ENCODE measurements at regions of chr20 and their contacts with region 1.

Region 1: DNA sequence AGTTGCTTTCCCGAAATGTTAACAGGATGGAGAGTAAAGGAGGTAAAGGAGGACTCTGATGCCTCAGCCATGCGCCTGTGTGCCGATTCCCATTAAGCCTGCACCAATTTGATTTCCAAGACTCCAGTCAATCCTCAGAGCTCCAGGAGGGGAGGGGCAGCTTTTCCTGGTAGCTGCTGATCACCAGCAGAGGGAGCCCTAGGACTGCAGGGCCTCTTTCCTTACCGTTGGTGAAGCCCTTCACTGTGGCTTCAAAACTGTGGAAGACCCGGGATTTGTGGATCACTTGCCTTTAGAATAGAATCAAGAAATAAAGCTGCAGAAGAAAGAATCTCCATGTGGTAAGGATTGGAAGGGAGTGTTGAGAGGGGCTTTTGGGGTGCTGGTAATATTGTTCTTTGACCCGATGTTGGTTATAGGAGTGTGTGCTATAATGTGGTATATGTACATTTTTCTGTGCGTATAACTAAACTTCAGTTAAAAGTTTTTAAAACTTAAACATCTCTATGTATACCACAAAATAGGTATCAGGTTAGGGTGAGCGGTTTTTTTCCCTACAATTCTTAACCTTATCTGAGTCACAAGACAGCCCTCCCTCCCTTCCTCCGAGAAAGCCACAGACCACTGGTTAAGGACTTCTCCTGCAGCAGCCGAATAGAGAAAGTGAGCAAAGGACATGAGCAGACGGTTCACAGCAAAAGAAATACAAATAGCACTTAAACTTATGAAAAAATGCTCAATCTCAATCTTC is 6.9 kb upstream of the OSER1 start:
- DNase-seq: peak; percentile 72

Region 2: DNA sequence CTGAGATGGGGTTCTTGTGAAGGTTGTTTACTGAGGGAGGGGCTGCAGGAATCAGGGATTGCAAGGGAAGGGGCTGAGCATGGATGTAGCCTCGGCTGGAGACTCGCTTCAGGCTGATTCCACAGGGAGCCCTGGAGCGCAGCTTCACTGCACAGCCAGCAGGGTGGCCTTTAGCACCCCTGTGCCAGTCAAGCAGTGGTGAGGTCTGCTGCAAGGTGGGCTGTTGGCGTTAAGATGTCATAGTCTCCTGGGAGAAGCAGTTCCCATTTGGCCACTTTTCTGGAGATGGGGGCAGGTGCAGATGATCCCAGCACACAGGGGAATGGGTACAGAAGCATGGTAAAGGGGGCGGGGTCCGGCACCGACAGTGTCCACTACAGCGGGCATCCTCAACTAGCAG is 176.5 kb before region 1 on chr20:
- CTCF ChIA-PET with region 1: no interaction called
- POLR2A ChIA-PET with region 1: no interaction called
- DNase-seq: no peak

Region 3: GRCh38 chr20:44204155-44204831 is 13.2 kb before region 1 on chr20:
- CTCF ChIA-PET with region 1: no interaction called
- POLR2A ChIA-PET with region 1: no interaction called
- DNase-seq: no peak

Region 4: DNA sequence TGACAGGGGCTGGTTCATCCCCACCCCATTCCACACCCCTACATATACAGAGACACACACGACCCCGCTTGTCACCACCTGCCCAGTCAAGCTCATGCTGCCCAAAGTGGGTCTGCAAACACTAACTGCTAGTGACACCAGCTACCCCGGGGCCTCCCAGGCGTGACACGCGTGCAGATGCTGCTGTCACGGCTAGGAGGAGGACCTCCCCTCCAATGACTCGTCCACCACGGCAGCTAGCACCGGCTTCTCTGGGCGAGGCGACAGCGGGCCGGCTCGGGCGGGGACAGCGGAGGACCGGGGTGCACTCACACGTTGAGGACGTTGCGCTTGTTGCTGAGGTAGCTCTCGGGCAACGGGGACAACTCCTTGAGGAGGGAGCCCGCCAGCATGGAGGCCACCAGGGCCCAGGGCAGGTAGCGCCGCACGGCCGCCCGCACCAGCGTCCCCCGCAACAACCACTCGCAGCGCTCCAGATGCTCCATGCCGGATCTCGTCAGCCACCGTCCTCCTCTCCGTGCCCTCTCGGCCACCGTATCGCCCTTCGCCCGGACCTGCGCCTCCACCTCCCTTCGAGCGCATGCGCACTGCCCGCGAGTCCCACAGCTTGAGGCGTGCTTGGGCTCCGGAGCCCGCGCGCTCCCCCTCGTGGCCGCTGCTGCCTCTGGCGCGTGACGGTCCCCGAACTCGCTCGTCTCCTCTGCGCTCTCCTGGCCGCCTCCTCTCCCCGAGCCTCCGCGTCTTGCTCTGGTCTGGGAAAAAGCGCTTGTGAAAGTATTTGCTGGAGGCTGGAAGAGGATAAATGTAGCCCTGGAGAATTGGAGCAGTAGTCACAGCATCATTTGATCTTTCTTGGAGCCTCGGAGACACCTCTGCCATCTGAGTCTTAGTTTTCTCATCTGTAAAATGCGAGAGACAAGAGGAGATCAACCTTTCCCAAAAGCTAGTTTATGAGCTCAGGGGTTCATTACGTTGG is 93.4 kb after region 1 on chr20 and contains the start of gene FITM2:
- CTCF ChIA-PET with region 1: interaction called, 49 read pairs
- POLR2A ChIA-PET with region 1: interaction called, 10 read pairs
- DNase-seq: peak; percentile 98

Measured in HEK293T (cell line).